GM12878 (cell line): ENCODE measurements at regions of chr15 and their contacts with region 1.

Region 1: DNA sequence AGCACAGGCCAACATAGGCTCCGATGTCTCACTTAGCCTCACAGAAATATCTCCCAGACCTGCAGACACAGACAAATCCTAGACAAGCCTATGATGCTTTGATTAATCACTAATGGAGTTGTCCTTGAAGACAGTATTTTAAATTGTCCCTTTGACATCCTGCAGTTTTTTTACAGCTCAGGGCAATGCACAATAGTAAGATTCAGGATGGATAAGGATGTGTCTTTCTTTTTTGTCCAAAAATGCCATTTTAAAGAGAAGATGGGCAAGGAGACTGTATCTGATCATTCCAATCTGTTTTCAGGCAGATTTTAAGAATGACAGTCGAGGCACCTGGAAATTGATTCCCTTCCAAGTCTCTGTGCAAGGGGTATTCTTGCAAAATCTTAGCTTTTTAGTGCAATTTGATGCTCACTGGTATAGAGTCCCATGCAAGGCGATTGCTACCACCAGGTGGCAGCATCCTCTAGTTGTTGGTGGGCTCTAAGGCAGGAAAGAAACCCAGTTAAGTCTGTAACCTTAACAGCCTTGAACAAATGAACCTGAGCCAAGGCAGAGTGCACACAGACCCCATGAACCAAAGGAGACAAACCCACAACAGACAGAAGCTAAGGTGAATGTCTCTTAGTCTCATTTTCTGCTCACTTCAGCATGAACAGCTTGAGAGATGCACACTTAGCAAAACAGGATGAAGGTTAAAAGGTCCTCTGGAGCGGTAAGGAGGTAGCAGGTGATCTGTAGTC is 51.2 kb upstream of the MINAR1 start:
- DNase-seq: peak; percentile 15
- ATAC-seq: peak; percentile 99
- H3K4me3 ChIP-seq: no peak overlapping the region
- H3K27ac ChIP-seq: no peak overlapping the region
- H3K4me1 ChIP-seq: no peaks in the 10 kb centered on the region
- H3K27me3 ChIP-seq: no peaks in the 10 kb centered on the region
- CTCF ChIP-seq: peak; percentile 82 to 89 (median 87)
- EP300 ChIP-seq: no peak
- POLR2A ChIP-seq: no peak
- RAD21 ChIP-seq: peak; percentile 88

Region 2: DNA sequence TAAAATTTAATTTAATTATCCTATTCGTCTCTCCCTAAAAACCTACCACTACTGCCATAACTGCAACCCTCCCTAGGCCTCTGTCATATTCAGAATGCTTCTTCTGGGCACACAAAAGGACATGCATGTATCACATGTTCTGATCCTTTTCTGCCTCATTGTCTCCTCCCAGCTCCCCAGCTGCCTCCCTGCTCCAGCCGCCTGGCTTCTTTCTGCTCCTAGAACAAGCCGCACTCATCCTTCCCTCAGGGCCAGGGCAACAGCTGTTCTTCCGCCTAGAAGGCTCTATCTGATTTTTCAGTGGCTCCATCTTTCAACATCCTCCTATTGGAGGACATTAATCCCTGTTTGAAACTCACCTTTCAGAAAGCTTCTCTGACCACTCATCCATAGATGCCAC is 31.4 kb before region 1 on chr15:
- CTCF ChIA-PET with region 1: interaction called, 17 read pairs
- POLR2A ChIA-PET with region 1: no interaction called
- RAD21 ChIA-PET with region 1: no interaction called
- SMC1A ChIA-PET with region 1: interaction called, 3 read pairs
- in situ Hi-C with region 1: no loop called
- intact Hi-C with region 1: no loop called
- DNase-seq: no peak
- ATAC-seq: no peak
- H3K4me3 ChIP-seq: no peak overlapping the region
- H3K27ac ChIP-seq: no peak overlapping the region
- H3K4me1 ChIP-seq: no peaks in the 10 kb centered on the region
- H3K27me3 ChIP-seq: no peaks in the 10 kb centered on the region
- CTCF ChIP-seq: no peak
- EP300 ChIP-seq: no peak
- POLR2A ChIP-seq: no peak
- RAD21 ChIP-seq: no peak

Region 3: GRCh38 chr15:79364571-79365240 is 16.2 kb before region 1 on chr15:
- CTCF ChIA-PET with region 1: interaction called, 18 read pairs
- POLR2A ChIA-PET with region 1: no interaction called
- RAD21 ChIA-PET with region 1: interaction called, 3 read pairs
- SMC1A ChIA-PET with region 1: interaction called, 10 read pairs
- in situ Hi-C with region 1: no loop called
- intact Hi-C with region 1: no loop called
- DNase-seq: no peak
- ATAC-seq: no peak
- H3K4me3 ChIP-seq: no peak overlapping the region
- H3K27ac ChIP-seq: no peak overlapping the region
- H3K4me1 ChIP-seq: no peaks in the 10 kb centered on the region
- H3K27me3 ChIP-seq: no peaks in the 10 kb centered on the region
- CTCF ChIP-seq: no peak
- EP300 ChIP-seq: no peak
- POLR2A ChIP-seq: no peak
- RAD21 ChIP-seq: no peak

Region 4: GRCh38 chr15:79394231-79394630 is 13.3 kb after region 1 on chr15:
- CTCF ChIA-PET with region 1: interaction called, 49 read pairs
- POLR2A ChIA-PET with region 1: no interaction called
- RAD21 ChIA-PET with region 1: interaction called, 4 read pairs
- SMC1A ChIA-PET with region 1: interaction called, 10 read pairs
- in situ Hi-C with region 1: no loop called
- intact Hi-C with region 1: no loop called
- DNase-seq: no peak
- ATAC-seq: no peak
- H3K4me3 ChIP-seq: no peak overlapping the region
- H3K27ac ChIP-seq: no peak overlapping the region
- H3K4me1 ChIP-seq: no peaks in the 10 kb centered on the region
- H3K27me3 ChIP-seq: no peaks in the 10 kb centered on the region
- CTCF ChIP-seq: no peak
- EP300 ChIP-seq: no peak
- POLR2A ChIP-seq: no peak
- RAD21 ChIP-seq: no peak

Region 5: DNA sequence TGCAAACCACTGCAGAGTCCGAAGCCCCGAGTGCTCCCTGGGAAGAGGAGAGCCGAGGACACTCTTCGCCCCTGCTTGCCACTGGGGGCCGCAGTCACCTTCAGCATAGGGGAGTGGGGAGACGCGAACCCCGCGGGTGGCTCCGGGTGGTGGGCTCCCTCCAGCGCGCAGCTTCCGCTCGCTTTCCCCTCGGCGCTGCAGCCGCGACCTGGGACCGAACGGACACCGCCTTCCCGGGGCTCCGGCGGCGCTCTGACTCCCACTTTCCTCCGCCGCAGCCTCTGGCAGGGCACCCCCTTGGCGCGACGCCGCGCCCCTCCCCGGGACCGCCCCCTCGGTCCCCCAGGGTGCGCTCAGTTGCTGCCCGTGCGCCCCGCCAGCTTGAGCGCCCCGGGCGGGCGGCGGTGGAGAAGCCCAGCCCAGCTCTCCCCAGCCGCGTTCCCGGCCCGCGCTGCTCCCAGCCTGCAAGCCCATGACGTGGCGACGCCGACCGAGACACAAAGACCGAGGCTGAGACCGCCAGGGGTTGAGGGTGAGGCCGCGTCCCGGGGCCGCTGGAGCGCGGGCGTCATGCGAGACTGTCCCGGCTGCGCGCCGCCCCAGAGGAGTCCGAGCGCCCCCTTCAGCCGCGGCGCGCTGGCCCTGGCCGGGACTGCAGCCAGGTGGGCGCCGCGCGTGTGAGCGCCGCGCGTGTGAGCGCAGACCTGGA is 50.9 kb after region 1 on chr15 and contains the start of gene MINAR1:
- CTCF ChIA-PET with region 1: no interaction called
- POLR2A ChIA-PET with region 1: no interaction called
- RAD21 ChIA-PET with region 1: no interaction called
- SMC1A ChIA-PET with region 1: no interaction called
- in situ Hi-C with region 1: no loop called
- intact Hi-C with region 1: no loop called
- DNase-seq: no peak
- ATAC-seq: peak; percentile 42
- H3K4me3 ChIP-seq: no peak within 1 kb of the TSS
- H3K27ac ChIP-seq: no peak within 1 kb of the TSS
- H3K4me1 ChIP-seq: no peaks in the 10 kb centered on the region
- H3K27me3 ChIP-seq: peaks cover 10 to 34% of the 10 kb centered on the region in 2 experiments
- CTCF ChIP-seq: no peak
- EP300 ChIP-seq: no peak
- POLR2A ChIP-seq: no peak
- RAD21 ChIP-seq: no peak
- polyA plus RNA-seq, gene MINAR1: 0.05 to 0.07 TPM

Region 6: GRCh38 chr15:79505956-79506355 is 125.0 kb after region 1 on chr15:
- CTCF ChIA-PET with region 1: no interaction called
- POLR2A ChIA-PET with region 1: no interaction called
- RAD21 ChIA-PET with region 1: no interaction called
- SMC1A ChIA-PET with region 1: no interaction called
- in situ Hi-C with region 1: no loop called
- intact Hi-C with region 1: no loop called
- DNase-seq: no peak
- ATAC-seq: no peak
- H3K4me3 ChIP-seq: no peak overlapping the region
- H3K27ac ChIP-seq: no peak overlapping the region
- H3K4me1 ChIP-seq: no peaks in the 10 kb centered on the region
- H3K27me3 ChIP-seq: peaks cover 0 to 2% of the 10 kb centered on the region in 2 experiments; a peak in 3 of 4 replicates
- CTCF ChIP-seq: no peak
- EP300 ChIP-seq: no peak
- POLR2A ChIP-seq: no peak
- RAD21 ChIP-seq: no peak

Region 7: DNA sequence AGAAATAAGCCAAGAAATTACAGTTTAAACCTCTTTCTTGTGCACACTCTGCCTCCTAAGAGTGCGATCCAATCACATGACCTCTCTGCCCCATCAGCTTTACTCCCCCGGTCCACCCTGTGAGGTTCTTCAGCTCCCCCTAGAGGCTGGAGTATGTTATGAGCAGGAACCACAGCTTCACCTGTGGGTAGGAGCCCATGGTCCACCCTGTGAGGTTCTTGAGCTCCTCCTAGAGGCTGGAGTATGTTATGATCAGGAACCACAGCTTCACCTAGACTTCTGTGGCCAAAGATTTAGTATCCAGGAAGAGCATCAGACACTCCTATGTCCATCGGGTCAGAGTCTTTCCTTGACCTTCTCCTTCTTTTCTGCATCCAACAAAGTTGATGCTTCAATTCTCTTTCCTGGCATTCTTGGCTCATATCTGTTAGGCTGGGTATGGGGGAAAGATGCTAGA is 215.2 kb after region 1 on chr15:
- CTCF ChIA-PET with region 1: interaction called, 174 read pairs
- POLR2A ChIA-PET with region 1: no interaction called
- RAD21 ChIA-PET with region 1: interaction called, 69 read pairs
- SMC1A ChIA-PET with region 1: interaction called, 48 read pairs
- in situ Hi-C with region 1: loop called (anchors 5 kb)
- intact Hi-C with region 1: loop called (anchors 1 kb)
- DNase-seq: peak; percentile 71
- ATAC-seq: peak; percentile 100
- H3K4me3 ChIP-seq: no peak overlapping the region
- H3K27ac ChIP-seq: no peak overlapping the region
- H3K4me1 ChIP-seq: no peaks in the 10 kb centered on the region
- H3K27me3 ChIP-seq: no peaks in the 10 kb centered on the region
- CTCF ChIP-seq: peak; percentile 97 to 100 (median 99); a peak in 5 of 6 replicates
- EP300 ChIP-seq: no peak
- POLR2A ChIP-seq: no peak
- RAD21 ChIP-seq: peak; percentile 89

Region 8: DNA sequence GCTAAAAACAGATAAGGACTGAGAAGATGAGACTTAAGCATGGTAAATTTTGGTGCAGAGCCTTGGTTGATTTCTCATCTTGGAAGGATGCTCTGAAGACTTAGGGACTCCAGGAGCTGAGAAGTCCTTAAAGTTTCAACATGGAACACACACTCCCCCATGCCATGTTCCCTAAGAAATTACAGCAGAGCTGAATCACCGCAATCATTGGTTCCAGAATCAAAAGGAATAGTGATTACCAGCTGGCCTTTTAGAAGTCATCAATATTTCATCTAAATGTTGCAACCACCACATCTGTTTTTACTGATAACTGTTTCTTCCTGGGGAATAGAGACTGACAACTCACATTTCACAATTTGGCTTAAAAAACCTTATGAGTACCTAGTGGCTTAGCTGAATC is 280.5 kb after region 1 on chr15:
- CTCF ChIA-PET with region 1: no interaction called
- POLR2A ChIA-PET with region 1: no interaction called
- RAD21 ChIA-PET with region 1: no interaction called
- SMC1A ChIA-PET with region 1: no interaction called
- in situ Hi-C with region 1: no loop called
- intact Hi-C with region 1: no loop called
- DNase-seq: no peak
- ATAC-seq: no peak
- H3K4me3 ChIP-seq: no peak overlapping the region
- H3K27ac ChIP-seq: no peak overlapping the region
- H3K4me1 ChIP-seq: no peaks in the 10 kb centered on the region
- H3K27me3 ChIP-seq: no peaks in the 10 kb centered on the region
- CTCF ChIP-seq: no peak
- EP300 ChIP-seq: no peak
- POLR2A ChIP-seq: no peak
- RAD21 ChIP-seq: no peak

Region 9: GRCh38 chr15:79798311-79798710 is 417.4 kb after region 1 on chr15:
- CTCF ChIA-PET with region 1: no interaction called
- POLR2A ChIA-PET with region 1: no interaction called
- RAD21 ChIA-PET with region 1: no interaction called
- SMC1A ChIA-PET with region 1: no interaction called
- in situ Hi-C with region 1: no loop called
- intact Hi-C with region 1: no loop called
- DNase-seq: no peak
- ATAC-seq: no peak
- H3K4me3 ChIP-seq: no peak overlapping the region
- H3K27ac ChIP-seq: no peak overlapping the region
- H3K4me1 ChIP-seq: no peaks in the 10 kb centered on the region
- H3K27me3 ChIP-seq: no peaks in the 10 kb centered on the region
- CTCF ChIP-seq: no peak
- EP300 ChIP-seq: no peak
- POLR2A ChIP-seq: no peak
- RAD21 ChIP-seq: no peak